ENCODE measurements at regions of chr6 and their contacts with region 1.

Region 1: DNA sequence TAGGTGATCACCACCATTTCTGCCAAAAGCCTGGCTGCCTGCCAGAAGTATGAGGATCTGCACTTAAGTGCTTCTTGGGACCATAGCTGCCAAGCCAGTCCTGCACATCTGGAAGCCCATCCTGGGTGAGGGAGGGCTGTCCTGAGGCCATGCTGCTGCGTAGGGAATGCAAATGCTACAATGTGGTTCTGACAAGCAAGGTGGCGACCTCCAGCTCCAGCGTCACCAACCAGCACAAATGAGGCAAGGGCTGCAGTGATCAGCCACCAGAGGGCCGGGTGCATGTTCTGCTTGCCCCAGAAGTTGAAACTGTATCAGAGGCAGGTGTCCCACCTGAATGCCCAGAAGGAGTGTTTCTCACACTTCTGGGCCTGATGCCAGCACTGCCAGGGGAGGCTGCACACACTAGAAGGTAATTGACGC is 99.1 kb upstream of the KCNQ5 start:
- DNase-seq: peak; percentile 66
- ATAC-seq: peak; percentile 100
- H3K4me3 Mint-ChIP-seq: no peak overlapping the region
- H3K27ac Mint-ChIP-seq: no peak overlapping the region; the same call in 1 of the 2 replicates
- H3K4me1 Mint-ChIP-seq: no peaks in the 10 kb centered on the region
- H3K27me3 Mint-ChIP-seq: no peaks in the 10 kb centered on the region
- CTCF ChIP-seq: peak; percentile 31; the same call in 1 of the 2 replicates

Region 2: GRCh38 chr6:72553531-72554511 is 31.1 kb after region 1 on chr6:
- CTCF ChIA-PET with region 1: interaction called, 10 read pairs
- POLR2A ChIA-PET with region 1: no interaction called
- DNase-seq: no peak
- ATAC-seq: peak; percentile 68
- H3K4me3 Mint-ChIP-seq: no peak overlapping the region
- H3K27ac Mint-ChIP-seq: peak overlapping the region; percentile 98
- H3K4me1 Mint-ChIP-seq: peaks cover 56% of the 10 kb centered on the region
- H3K27me3 Mint-ChIP-seq: no peaks in the 10 kb centered on the region
- CTCF ChIP-seq: no peak